ENCODE measurements at regions of chr18 and their contacts with region 1.

Region 1: DNA sequence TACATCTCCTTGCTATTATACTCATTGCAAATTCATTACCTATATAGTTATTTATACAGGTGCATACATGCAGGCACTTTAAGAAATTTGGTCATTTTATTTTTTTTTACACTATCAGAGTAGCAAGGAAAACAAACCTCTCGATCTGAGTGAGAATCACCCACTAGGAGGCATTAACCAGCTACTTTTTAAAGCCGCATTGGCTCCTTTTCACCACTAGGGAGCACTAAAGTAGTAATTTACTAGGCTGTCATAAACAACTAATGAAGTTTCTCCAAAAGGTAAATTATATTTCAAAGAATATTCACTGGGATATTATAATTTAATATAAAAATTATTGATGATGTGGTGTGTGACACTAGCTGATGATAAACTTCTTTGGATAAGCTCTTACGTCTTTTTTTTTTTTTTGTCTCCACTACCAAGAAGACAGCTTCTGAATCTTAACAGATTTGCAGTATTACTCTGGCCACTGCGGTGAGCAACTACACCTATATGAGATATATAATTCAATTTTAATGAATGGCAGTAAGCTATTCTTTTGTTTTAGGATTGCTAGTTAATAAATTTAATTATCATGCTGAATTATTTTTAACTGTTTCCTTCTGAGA is 101.9 kb downstream of the NOL4 start:
- DNase-seq: no peak
- H3K4me3 ChIP-seq: no peak overlapping the region
- H3K27ac ChIP-seq: no peak overlapping the region
- H3K4me1 ChIP-seq: no peaks in the 10 kb centered on the region
- H3K27me3 ChIP-seq: no peaks in the 10 kb centered on the region
- CTCF ChIP-seq: peak; percentile 87

Region 2: GRCh38 chr18:34224423-34225217 is 101.8 kb after region 1 on chr18 and contains the start of gene NOL4:
- intact Hi-C with region 1: no loop called
- DNase-seq: no peak
- H3K4me3 ChIP-seq: peak within 1 kb of the TSS; percentile 63
- H3K27ac ChIP-seq: no peak within 1 kb of the TSS
- H3K4me1 ChIP-seq: peaks cover 36% of the 10 kb centered on the region
- H3K27me3 ChIP-seq: peaks cover 96% of the 10 kb centered on the region
- CTCF ChIP-seq: peak; percentile 41
- total RNA-seq, gene NOL4: not detected

Region 3: DNA sequence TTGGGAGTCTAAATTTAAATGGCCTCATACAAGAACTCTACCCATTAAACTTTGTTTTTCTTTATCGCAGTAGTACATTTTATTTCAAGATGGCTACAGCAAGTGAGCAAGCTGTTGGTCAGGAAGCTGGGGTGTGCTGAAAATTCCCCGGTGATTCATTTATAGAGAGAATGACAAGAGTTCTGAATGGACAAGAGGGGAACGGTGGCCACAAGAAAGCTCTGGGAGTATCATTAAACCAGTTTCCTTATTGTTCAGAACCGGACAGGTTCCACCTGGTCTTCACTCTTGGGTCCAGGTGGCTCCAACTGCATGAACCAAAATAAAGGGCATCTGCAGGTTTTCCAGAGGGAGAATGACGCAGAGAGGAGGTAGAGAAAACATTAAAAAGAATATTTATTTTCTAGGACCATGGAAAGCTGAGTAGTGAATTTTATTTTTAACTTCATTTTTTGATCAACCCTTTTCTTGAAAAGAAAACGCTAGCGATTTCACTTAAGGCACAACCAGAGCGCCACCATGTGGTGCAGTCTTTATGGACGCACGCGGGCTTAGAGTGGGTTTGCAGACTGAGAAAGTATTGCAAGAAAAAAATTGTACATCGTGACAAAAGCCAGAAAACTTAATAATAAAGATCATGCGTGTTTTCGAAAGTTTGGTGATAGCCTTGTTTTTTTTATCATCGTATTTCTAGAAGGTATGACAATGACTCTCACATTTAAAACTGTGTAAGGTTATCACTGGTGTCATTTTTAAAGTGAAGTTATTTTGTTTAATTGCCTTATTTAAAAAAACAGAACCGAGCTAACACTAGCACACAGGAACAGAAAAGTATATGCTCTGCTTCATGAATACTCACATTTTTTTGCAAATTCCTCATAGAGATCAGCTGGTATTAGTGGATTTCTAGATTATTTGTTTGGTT is 199.8 kb after region 1 on chr18:
- intact Hi-C with region 1: loop called (anchors 10 kb)
- DNase-seq: peak; percentile 24
- H3K4me3 ChIP-seq: no peak overlapping the region
- H3K27ac ChIP-seq: no peak overlapping the region
- H3K4me1 ChIP-seq: no peaks in the 10 kb centered on the region
- H3K27me3 ChIP-seq: peaks cover 8% of the 10 kb centered on the region
- CTCF ChIP-seq: peak; percentile 65